B cell (primary cell): ENCODE measurements at regions of chr21 and their contacts with region 1.

Region 1: GRCh38 chr21:20040768-20041167 is 957.4 kb upstream of the NCAM2 start:
- DNase-seq: no peak
- ATAC-seq: no peak
- H3K4me3 ChIP-seq: no peak overlapping the region
- H3K4me3 Mint-ChIP-seq: no peak overlapping the region
- H3K27ac ChIP-seq: no peak overlapping the region
- H3K27ac Mint-ChIP-seq: no peak overlapping the region
- H3K4me1 ChIP-seq: no peaks in the 10 kb centered on the region
- H3K4me1 Mint-ChIP-seq: no peaks in the 10 kb centered on the region
- H3K27me3 ChIP-seq: no peaks in the 10 kb centered on the region
- H3K27me3 Mint-ChIP-seq: no peaks in the 10 kb centered on the region
- CTCF ChIP-seq: no peak

Region 2: DNA sequence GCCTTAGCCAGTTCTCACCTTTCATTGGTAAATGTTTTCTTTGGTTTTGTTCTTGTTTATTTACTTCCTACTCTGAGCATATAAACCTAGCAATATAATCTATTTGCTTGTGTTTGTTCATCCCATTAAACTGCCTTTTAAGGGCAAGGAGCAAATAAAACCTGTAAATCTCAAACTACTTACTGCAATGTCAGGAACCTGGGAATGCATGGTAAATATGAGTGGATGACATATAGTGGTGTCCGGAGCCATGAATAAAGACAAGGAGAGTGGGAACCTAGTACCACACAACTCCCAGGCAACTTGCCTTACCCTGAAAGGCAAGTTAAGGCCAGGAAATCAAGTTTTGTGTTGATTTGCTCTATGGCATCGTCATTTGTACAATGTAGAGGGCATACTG is 176.3 kb before region 1 on chr21:
- CTCF ChIA-PET with region 1: no interaction called
- POLR2A ChIA-PET with region 1: no interaction called
- intact Hi-C with region 1: no loop called
- DNase-seq: no peak
- ATAC-seq: no peak
- H3K4me3 ChIP-seq: no peak overlapping the region
- H3K4me3 Mint-ChIP-seq: no peak overlapping the region
- H3K27ac ChIP-seq: no peak overlapping the region
- H3K27ac Mint-ChIP-seq: no peak overlapping the region
- H3K4me1 ChIP-seq: no peaks in the 10 kb centered on the region
- H3K4me1 Mint-ChIP-seq: no peaks in the 10 kb centered on the region
- H3K27me3 ChIP-seq: no peaks in the 10 kb centered on the region
- H3K27me3 Mint-ChIP-seq: no peaks in the 10 kb centered on the region
- CTCF ChIP-seq: no peak

Region 3: DNA sequence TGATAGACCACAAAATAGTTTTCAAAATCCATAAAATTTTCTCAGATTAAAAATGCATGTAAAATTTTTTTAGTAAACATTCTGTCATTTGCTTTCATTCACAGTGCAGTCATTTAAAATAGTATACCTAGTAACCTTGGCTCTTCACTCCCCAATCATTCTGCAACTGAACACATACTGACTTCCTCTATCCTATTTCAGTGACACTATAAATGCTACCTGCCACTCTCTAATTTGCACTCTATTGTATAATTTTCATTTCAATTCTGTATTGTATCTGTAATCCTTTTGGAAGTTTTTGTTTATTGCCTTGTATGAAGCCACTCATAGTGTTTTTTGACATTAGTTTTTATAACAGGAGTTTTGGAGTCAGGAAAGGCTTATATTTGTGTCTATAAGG is 71.6 kb before region 1 on chr21:
- CTCF ChIA-PET with region 1: no interaction called
- POLR2A ChIA-PET with region 1: no interaction called
- intact Hi-C with region 1: no loop called
- DNase-seq: no peak
- ATAC-seq: no peak
- H3K4me3 ChIP-seq: no peak overlapping the region
- H3K4me3 Mint-ChIP-seq: no peak overlapping the region
- H3K27ac ChIP-seq: no peak overlapping the region
- H3K27ac Mint-ChIP-seq: no peak overlapping the region
- H3K4me1 ChIP-seq: no peaks in the 10 kb centered on the region
- H3K4me1 Mint-ChIP-seq: no peaks in the 10 kb centered on the region
- H3K27me3 ChIP-seq: no peaks in the 10 kb centered on the region
- H3K27me3 Mint-ChIP-seq: no peaks in the 10 kb centered on the region
- CTCF ChIP-seq: no peak

Region 4: GRCh38 chr21:19987671-19988070 is 53.1 kb before region 1 on chr21:
- CTCF ChIA-PET with region 1: no interaction called
- POLR2A ChIA-PET with region 1: no interaction called
- intact Hi-C with region 1: loop called (anchors 5 kb)
- DNase-seq: no peak
- ATAC-seq: no peak
- H3K4me3 ChIP-seq: no peak overlapping the region
- H3K4me3 Mint-ChIP-seq: no peak overlapping the region
- H3K27ac ChIP-seq: no peak overlapping the region
- H3K27ac Mint-ChIP-seq: no peak overlapping the region
- H3K4me1 ChIP-seq: no peaks in the 10 kb centered on the region
- H3K4me1 Mint-ChIP-seq: no peaks in the 10 kb centered on the region
- H3K27me3 ChIP-seq: no peaks in the 10 kb centered on the region
- H3K27me3 Mint-ChIP-seq: no peaks in the 10 kb centered on the region
- CTCF ChIP-seq: no peak